B cell (primary cell): ENCODE measurements at regions of chr1 and their contacts with region 1.

Region 1: DNA sequence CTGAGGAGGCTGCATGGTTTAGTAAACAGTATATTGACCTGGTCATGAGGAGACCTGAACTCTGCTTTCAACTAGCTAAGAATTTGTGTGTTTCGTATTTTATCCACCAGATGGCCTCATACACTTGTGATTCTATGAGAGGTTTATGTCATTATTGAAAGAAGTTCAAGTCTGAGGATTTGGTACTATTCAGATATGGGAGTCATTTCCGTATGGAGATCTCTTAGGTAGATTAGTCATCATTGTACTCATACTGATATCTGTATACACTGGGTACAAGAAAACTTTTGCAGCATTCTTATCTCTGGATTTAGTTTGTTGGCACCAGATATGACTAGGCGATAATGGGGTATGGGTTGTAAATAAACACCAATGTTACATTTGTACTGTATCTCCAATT is 26.6 kb downstream of the ATF6 start:
- DNase-seq: peak; percentile 47
- ATAC-seq: no peak
- H3K4me3 ChIP-seq: no peak overlapping the region
- H3K4me3 Mint-ChIP-seq: no peak overlapping the region
- H3K27ac ChIP-seq: no peak overlapping the region
- H3K27ac Mint-ChIP-seq: no peak overlapping the region
- H3K4me1 ChIP-seq: no peaks in the 10 kb centered on the region
- H3K4me1 Mint-ChIP-seq: peaks cover 3% of the 10 kb centered on the region
- H3K27me3 ChIP-seq: no peaks in the 10 kb centered on the region
- H3K27me3 Mint-ChIP-seq: no peaks in the 10 kb centered on the region
- CTCF ChIP-seq: peak; percentile 71

Region 2: DNA sequence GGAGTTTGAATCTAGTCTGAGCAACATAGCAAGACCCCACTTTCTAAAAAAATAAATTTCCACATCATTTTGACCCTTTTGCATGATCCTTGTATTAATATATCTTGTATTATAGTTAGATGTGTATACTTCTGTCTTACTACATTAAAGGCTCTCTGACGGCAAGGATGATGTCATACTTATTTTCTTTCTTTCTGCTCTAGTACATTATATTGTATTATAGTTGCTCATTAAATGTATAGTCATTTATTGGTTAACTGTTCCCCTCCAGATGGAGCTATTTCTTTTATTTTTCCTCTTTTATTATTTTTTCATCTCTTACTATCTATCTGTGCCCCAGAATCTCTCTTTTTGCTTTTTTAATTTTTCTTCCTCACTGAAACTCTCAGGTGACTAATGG is 245.9 kb after region 1 on chr1:
- CTCF ChIA-PET with region 1: interaction called, 17 read pairs
- POLR2A ChIA-PET with region 1: no interaction called
- intact Hi-C with region 1: no loop called
- DNase-seq: no peak
- ATAC-seq: no peak
- H3K4me3 ChIP-seq: no peak overlapping the region
- H3K4me3 Mint-ChIP-seq: no peak overlapping the region
- H3K27ac ChIP-seq: no peak overlapping the region
- H3K27ac Mint-ChIP-seq: no peak overlapping the region
- H3K4me1 ChIP-seq: no peaks in the 10 kb centered on the region
- H3K4me1 Mint-ChIP-seq: no peaks in the 10 kb centered on the region
- H3K27me3 ChIP-seq: peaks cover 0 to 12% (median 9%) of the 10 kb centered on the region in 4 experiments
- H3K27me3 Mint-ChIP-seq: peaks cover 61% of the 10 kb centered on the region
- CTCF ChIP-seq: no peak

Region 3: GRCh38 chr1:162627662-162628296 is 835.0 kb after region 1 on chr1:
- CTCF ChIA-PET with region 1: no interaction called
- POLR2A ChIA-PET with region 1: no interaction called
- intact Hi-C with region 1: loop called (anchors 5 kb)
- DNase-seq: peak; percentile 31
- ATAC-seq: no peak
- H3K4me3 ChIP-seq: no peak overlapping the region
- H3K4me3 Mint-ChIP-seq: no peak overlapping the region
- H3K27ac ChIP-seq: no peak overlapping the region
- H3K27ac Mint-ChIP-seq: no peak overlapping the region
- H3K4me1 ChIP-seq: no peaks in the 10 kb centered on the region
- H3K4me1 Mint-ChIP-seq: no peaks in the 10 kb centered on the region
- H3K27me3 ChIP-seq: peaks cover 0 to 19% (median 4%) of the 10 kb centered on the region in 4 experiments
- H3K27me3 Mint-ChIP-seq: peaks cover 34% of the 10 kb centered on the region
- CTCF ChIP-seq: peak; percentile 67